Vagina (tissue), 2 donors: ENCODE measurements at regions of chr4 and their contacts with region 1.

Region 1: DNA sequence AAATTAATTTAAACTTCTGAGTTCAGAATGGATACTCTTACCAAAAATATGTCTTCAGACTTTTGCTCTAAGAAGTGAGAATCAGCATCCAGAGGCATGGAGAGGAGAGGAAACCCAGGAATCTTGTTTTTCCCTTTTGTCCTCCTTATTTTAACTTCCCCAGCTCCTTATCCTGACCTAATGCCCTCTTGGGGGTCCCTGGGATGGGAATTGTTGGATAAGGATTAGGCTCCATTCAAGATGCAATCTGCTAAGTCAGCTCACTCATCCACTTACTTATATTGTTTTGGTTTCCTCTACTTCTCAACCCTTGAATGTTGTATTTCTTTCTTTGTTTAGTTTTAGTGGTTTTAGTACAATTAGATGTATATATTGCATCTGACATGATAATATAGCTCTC is 208.4 kb upstream of the PCDH7 start:
- DNase-seq: no peak
- H3K4me3 ChIP-seq: no peak overlapping the region
- H3K27ac ChIP-seq: no peak overlapping the region
- H3K4me1 ChIP-seq: no peaks in the 10 kb centered on the region
- H3K27me3 ChIP-seq: no peaks in the 10 kb centered on the region
- CTCF ChIP-seq: no peak
- POLR2A ChIP-seq: no peak

Region 2: GRCh38 chr4:28730304-28730703 is 1781.4 kb before region 1 on chr4:
- intact Hi-C with region 1: no loop called
- DNase-seq: no peak
- H3K4me3 ChIP-seq: no peak overlapping the region
- H3K27ac ChIP-seq: no peak overlapping the region
- H3K4me1 ChIP-seq: no peaks in the 10 kb centered on the region
- H3K27me3 ChIP-seq: no peaks in the 10 kb centered on the region
- CTCF ChIP-seq: no peak
- POLR2A ChIP-seq: no peak

Region 3: GRCh38 chr4:30269850-30270249 is 241.9 kb before region 1 on chr4:
- intact Hi-C with region 1: no loop called
- DNase-seq: no peak
- H3K4me3 ChIP-seq: no peak overlapping the region
- H3K27ac ChIP-seq: no peak overlapping the region
- H3K4me1 ChIP-seq: no peaks in the 10 kb centered on the region
- H3K27me3 ChIP-seq: no peaks in the 10 kb centered on the region
- CTCF ChIP-seq: no peak
- POLR2A ChIP-seq: no peak

Region 4: GRCh38 chr4:30461218-30461617 is 50.5 kb before region 1 on chr4:
- intact Hi-C with region 1: no loop called
- DNase-seq: no peak
- H3K4me3 ChIP-seq: no peak overlapping the region
- H3K27ac ChIP-seq: no peak overlapping the region
- H3K4me1 ChIP-seq: no peaks in the 10 kb centered on the region
- H3K27me3 ChIP-seq: no peaks in the 10 kb centered on the region
- CTCF ChIP-seq: no peak
- POLR2A ChIP-seq: no peak

Region 5: GRCh38 chr4:31156221-31156620 is 644.5 kb after region 1 on chr4:
- intact Hi-C with region 1: loop called (anchors 5 kb)
- DNase-seq: no peak
- H3K4me3 ChIP-seq: no peak overlapping the region
- H3K27ac ChIP-seq: no peak overlapping the region
- H3K4me1 ChIP-seq: no peaks in the 10 kb centered on the region
- H3K27me3 ChIP-seq: no peaks in the 10 kb centered on the region
- CTCF ChIP-seq: no peak
- POLR2A ChIP-seq: no peak

Region 6: DNA sequence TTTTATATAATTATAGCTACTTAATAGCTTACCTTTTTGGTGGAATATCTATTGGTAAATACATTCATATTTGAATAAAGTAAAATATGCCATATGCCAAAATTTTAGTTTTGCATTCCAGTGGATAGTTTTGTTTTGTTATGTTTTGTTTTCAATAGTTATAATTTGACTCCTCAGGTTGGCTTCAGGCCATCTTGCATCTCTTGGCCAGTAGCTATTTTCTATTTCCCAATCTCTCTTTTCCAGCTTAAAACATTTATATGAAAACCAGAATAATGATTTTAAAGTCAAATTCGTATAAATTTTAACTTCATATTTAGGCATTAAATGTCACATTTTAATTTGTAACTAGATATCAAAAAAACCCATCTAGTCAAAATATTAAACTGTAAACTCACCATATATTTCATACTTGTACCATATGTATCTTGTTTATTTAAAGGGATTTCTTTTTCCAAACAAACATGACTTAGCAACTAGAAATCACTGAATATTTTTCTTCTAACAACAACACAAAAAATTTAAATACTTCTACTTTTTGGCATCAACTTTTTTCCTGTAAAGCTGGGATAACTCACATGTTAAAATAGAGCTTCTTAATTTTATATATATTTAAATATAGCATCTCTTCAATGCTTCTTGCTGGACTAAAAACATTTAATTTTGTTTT is 1418.1 kb after region 1 on chr4:
- intact Hi-C with region 1: loop called (anchors 5 kb)
- DNase-seq: no peak
- H3K4me3 ChIP-seq: no peak overlapping the region
- H3K27ac ChIP-seq: no peak overlapping the region
- H3K4me1 ChIP-seq: no peaks in the 10 kb centered on the region
- H3K27me3 ChIP-seq: no peaks in the 10 kb centered on the region
- CTCF ChIP-seq: no peak
- POLR2A ChIP-seq: no peak